ENCODE measurements at regions of chr3 and their contacts with region 1.

Region 1: DNA sequence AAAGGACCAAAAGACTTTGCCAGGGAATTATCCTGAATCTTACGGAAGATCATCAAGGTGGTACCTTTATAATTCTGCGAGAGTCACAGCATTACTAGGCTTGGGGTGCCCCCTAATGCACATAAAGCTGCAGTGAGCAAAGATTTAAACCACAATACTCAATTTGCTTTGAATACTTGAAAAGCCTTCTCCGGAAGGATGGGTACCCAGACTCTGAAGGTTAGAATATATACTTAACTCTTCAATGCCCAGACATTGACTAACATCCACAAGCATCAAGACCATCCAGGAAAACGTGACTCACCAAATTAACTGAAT is 117.8 kb upstream of the KCNH8 start:
- DNase-seq: peak; percentile 44
- H3K4me3 Mint-ChIP-seq: no peak overlapping the region
- H3K27ac Mint-ChIP-seq: no peak overlapping the region
- H3K4me1 Mint-ChIP-seq: peaks cover 5% of the 10 kb centered on the region
- H3K27me3 Mint-ChIP-seq: peaks cover 4% of the 10 kb centered on the region

Region 2: DNA sequence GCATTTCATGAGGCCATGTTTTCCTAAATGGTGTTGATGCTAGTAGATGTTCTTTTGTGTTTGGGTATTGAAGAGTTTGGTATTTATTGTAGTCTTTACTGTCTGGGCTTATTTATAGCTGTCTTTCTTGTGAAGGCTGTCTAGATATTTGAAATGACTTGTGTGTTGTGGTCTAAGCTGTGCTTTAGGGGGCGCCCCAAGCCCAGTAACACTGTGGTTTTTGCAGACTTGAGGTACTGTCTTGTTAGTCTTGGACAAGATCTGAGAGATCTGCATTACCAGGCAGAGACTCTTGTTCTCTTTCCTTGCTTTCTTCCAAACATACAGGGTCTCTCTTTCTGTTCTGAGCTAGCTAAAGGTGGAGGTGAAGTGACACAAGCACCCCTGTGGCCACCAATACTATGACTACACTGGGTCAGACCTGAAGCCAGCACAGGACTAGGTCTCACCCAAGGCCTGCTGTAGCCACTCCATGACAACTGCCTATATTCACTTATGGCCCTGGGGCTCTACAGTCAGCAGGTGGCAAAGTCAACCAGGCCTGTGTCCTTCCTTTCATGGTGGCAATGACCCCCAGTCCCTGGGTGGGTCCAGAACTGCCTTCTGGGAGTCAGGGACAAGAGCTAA is 1135.9 kb before region 1 on chr3:
- CTCF ChIA-PET with region 1: no interaction called
- intact Hi-C with region 1: loop called (anchors 1 kb)
- DNase-seq: peak; percentile 69
- H3K4me3 Mint-ChIP-seq: no peak overlapping the region
- H3K27ac Mint-ChIP-seq: no peak overlapping the region
- H3K4me1 Mint-ChIP-seq: no peaks in the 10 kb centered on the region
- H3K27me3 Mint-ChIP-seq: no peaks in the 10 kb centered on the region

Region 3: DNA sequence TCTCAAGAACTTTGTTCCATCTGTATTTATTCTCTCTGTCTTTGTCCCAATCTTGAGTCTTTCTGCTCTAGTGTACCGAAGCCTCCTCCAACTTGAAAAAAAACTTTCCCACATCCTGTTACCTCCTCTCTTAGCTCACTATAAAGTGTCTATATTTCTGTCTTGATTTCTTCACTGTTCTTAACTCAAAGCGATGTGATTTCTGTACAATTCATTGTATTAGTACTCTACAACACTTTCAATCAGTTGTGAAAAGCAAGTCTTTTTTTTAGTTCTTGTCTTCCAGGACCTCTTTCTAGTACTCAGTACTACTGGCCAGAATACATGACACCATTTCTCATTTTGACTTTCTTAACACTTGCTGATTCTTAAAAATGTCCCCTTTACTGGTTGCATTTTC is 251.9 kb before region 1 on chr3:
- CTCF ChIA-PET with region 1: no interaction called
- intact Hi-C with region 1: no loop called
- DNase-seq: no peak
- H3K4me3 Mint-ChIP-seq: peak overlapping the region; percentile 50
- H3K27ac Mint-ChIP-seq: peak overlapping the region; percentile 68
- H3K4me1 Mint-ChIP-seq: peaks cover 53% of the 10 kb centered on the region
- H3K27me3 Mint-ChIP-seq: no peaks in the 10 kb centered on the region

Region 4: GRCh38 chr3:19114461-19114860 is 84.0 kb after region 1 on chr3:
- CTCF ChIA-PET with region 1: no interaction called
- intact Hi-C with region 1: no loop called
- DNase-seq: no peak
- H3K4me3 Mint-ChIP-seq: no peak overlapping the region
- H3K27ac Mint-ChIP-seq: no peak overlapping the region
- H3K4me1 Mint-ChIP-seq: no peaks in the 10 kb centered on the region
- H3K27me3 Mint-ChIP-seq: peaks cover 2% of the 10 kb centered on the region